ENCODE measurements at regions of chr16 and their contacts with region 1.

Region 1: DNA sequence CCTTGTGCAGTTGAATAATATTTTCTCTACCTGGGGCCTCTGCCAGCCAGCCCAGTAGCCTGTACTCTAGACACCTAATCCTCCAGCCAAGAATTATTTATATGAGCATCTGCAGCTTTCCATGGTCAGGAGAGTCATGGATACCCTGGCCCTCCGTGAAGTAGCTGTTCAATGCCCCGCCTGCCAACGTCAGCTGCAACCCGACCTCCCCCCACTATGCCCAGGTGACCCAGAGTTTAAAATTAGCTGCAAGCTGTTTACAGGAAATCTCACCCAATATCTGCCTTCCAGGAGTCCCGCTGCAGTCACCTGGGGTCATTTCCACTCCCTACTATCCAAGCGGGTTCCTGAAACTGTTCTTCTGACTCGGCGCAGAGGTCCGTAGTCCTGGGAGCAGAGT is 12.3 kb downstream of the SDR42E2 start:
- DNase-seq: no peak
- ATAC-seq: no peak
- H3K4me3 ChIP-seq: no peak overlapping the region
- H3K4me3 Mint-ChIP-seq: no peak overlapping the region
- H3K27ac ChIP-seq: no peak overlapping the region
- H3K27ac Mint-ChIP-seq: no peak overlapping the region
- H3K4me1 ChIP-seq: no peaks in the 10 kb centered on the region
- H3K4me1 Mint-ChIP-seq: no peaks in the 10 kb centered on the region
- H3K27me3 ChIP-seq: no peaks in the 10 kb centered on the region
- H3K27me3 Mint-ChIP-seq: no peaks in the 10 kb centered on the region

Region 2: GRCh38 chr16:22161999-22162655 is 12.5 kb before region 1 on chr16 and contains the start of gene SDR42E2:
- CTCF ChIA-PET with region 1: no interaction called
- POLR2A ChIA-PET with region 1: interaction called in 1 of 2 experiments, 14 read pairs
- DNase-seq: peak in 34 of 35 experiments; percentile 0 to 68 (median 38)
- ATAC-seq: peak; percentile 85 to 96 (median 86)
- H3K4me3 ChIP-seq: peak within 1 kb of the TSS; percentile 28 to 49
- H3K4me3 Mint-ChIP-seq: peak within 1 kb of the TSS; percentile 22 to 47 (median 39)
- H3K27ac ChIP-seq: no peak within 1 kb of the TSS
- H3K27ac Mint-ChIP-seq: no peak within 1 kb of the TSS
- H3K4me1 ChIP-seq: peaks cover 0 to 8% of the 10 kb centered on the region in 2 experiments
- H3K4me1 Mint-ChIP-seq: peaks cover 2 to 10% (median 8%) of the 10 kb centered on the region in 3 donors
- H3K27me3 ChIP-seq: peaks cover 0 to 18% of the 10 kb centered on the region in 2 experiments
- H3K27me3 Mint-ChIP-seq: peaks cover 6 to 19% of the 10 kb centered on the region in 2 donors
- total RNA-seq, gene SDR42E2: 0.28 to 2.9 (median 0.39) TPM

Measured in T-cell (primary cell).